Caco-2 (cell line): ENCODE measurements at regions of chr6 and their contacts with region 1.

Region 1: DNA sequence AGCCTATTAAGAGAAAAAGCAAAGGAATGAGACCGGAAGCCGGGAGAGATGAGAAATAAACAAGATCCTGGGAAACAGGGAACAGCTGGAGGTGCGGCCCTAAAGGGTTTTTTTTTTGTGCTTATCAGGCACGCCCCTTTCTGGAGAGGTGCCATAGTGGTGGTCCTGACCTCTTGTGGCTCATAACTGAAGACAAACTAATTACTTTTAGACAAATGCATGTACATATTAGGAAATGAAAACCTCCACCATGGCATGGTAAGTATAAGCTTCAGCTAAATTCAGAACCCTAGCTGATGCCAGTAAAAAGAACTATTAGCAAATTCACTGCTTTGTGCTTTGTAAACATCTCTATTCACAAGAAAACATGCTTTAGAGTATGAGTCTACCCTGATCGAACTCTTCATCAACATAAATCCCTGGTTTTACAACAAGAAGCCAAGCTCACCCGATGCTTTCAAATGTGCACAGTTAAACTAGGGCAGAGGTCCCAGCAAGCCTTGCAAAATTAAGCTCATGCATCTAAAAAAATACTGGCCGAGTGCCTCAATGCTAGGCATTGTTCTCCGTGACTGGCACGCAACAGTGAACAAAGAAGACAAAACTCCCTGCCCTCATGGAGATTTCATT is 96.4 kb upstream of the MRPS10 start:
- DNase-seq: no peak
- H3K4me3 ChIP-seq: no peak overlapping the region
- H3K4me3 Mint-ChIP-seq: no peak overlapping the region
- H3K27ac Mint-ChIP-seq: peak overlapping the region; percentile 33
- H3K4me1 ChIP-seq: peaks cover 36% of the 10 kb centered on the region
- H3K4me1 Mint-ChIP-seq: peaks cover 36% of the 10 kb centered on the region
- H3K27me3 ChIP-seq: no peaks in the 10 kb centered on the region
- H3K27me3 Mint-ChIP-seq: no peaks in the 10 kb centered on the region
- CTCF ChIP-seq: no peak

Region 2: GRCh38 chr6:42532038-42532669 is 218.1 kb after region 1 on chr6:
- CTCF ChIA-PET with region 1: no interaction called
- POLR2A ChIA-PET with region 1: no interaction called
- intact Hi-C with region 1: loop called (anchors 1 kb)
- DNase-seq: peak; percentile 41 to 55
- H3K4me3 ChIP-seq: no peak overlapping the region
- H3K4me3 Mint-ChIP-seq: no peak overlapping the region
- H3K27ac Mint-ChIP-seq: no peak overlapping the region
- H3K4me1 ChIP-seq: no peaks in the 10 kb centered on the region
- H3K4me1 Mint-ChIP-seq: no peaks in the 10 kb centered on the region
- H3K27me3 ChIP-seq: no peaks in the 10 kb centered on the region
- H3K27me3 Mint-ChIP-seq: peaks cover 5% of the 10 kb centered on the region
- CTCF ChIP-seq: peak; percentile 83 to 91